Activated CD4-positive, alpha-beta T cell treated with anti-CD3 and anti-CD28 coated beads, Interleukin-2, amount 10 ng/mL, durations not matched to agents 24 days and 14 days (primary cell): ENCODE measurements at regions of chr3 and their contacts with region 1.

Region 1: GRCh38 chr3:31132132-31132769 is 237.8 kb upstream of the GADL1 start:
- DNase-seq: peak; percentile 69
- H3K4me3 Mint-ChIP-seq: no peak overlapping the region
- H3K27ac Mint-ChIP-seq: no peak overlapping the region
- H3K4me1 Mint-ChIP-seq: peaks cover 3% of the 10 kb centered on the region
- H3K27me3 Mint-ChIP-seq: no peaks in the 10 kb centered on the region

Region 2: DNA sequence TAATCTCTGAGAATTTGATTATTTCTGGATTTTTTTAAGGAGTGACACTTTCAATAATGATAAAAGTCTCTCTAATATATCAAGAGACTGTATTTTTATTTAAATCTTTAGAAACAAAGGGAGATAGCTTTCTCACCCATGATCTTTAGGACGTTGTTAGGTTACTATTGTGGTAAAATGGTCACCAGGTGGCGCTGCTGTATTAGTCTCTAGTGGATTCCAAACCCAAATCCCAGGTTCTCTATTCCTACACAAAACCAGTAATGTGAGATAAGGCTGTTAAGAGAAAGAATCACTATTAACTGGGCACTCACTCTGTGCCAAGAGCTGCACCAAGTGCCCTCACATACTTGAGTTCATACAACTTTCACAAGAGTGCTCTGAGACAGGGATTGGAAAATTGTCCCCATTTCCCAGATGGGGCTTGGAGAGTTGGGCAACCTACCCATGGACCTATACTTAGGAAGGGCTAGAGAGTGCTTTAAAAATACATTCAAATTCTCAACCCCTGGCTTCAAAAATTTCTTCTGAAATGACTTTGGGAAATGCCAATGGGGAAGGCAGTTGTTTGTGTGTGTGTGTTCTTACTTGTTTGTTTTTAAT is 1119.2 kb before region 1 on chr3:
- intact Hi-C with region 1: loop called (anchors 10 kb)
- DNase-seq: peak; percentile 79
- H3K4me3 Mint-ChIP-seq: no peak overlapping the region
- H3K27ac Mint-ChIP-seq: no peak overlapping the region
- H3K4me1 Mint-ChIP-seq: peaks cover 3% of the 10 kb centered on the region
- H3K27me3 Mint-ChIP-seq: peaks cover 7% of the 10 kb centered on the region

Region 3: DNA sequence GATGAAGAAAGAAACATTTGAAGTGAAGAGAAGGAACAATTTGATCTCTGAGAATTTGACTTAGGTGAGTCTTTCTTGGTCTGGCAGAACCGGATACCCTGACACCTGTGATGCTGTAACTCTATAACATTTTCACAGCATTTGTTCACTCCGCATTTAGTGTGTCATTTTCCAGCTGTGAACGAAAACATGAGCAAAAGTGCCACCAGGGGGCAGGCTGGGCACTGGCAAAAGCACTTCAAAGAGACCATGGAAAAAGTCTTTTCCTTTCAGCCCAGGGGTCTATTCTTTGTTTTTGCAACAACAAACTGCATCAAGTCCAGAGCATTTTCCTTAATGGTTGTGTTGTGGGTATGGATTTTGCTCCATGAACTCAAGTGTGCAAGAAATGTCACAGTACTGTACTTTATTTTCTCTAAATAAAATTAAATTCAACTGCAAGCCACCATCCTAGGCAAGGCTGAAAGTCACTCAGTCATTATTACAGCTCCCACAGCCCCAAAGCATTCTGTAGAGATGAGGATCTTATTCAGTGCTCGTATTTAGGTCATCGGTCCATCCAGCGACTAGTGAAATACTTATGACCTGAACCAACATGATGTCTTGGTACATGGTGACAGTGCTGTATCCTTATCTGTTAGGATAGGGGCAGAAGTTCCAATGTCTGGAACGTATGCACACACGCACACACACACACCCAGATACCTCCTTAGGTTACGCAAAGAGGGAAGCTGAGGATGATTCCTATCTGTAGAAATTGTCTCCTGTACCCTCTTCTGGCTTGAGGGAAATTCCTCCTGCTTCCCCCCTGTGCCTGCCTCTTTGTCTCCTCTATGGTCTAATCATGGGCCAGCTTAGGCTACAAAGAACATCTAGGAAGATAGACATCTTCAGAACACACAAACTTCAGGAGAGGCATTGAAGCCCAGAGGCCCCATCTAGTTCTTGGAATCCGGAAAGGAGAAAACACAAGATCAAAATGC is 363.3 kb before region 1 on chr3:
- intact Hi-C with region 1: loop called (anchors 1 kb)
- DNase-seq: peak; percentile 90
- H3K4me3 Mint-ChIP-seq: no peak overlapping the region
- H3K27ac Mint-ChIP-seq: no peak overlapping the region
- H3K4me1 Mint-ChIP-seq: peaks cover 4% of the 10 kb centered on the region
- H3K27me3 Mint-ChIP-seq: peaks cover 25% of the 10 kb centered on the region

Region 4: DNA sequence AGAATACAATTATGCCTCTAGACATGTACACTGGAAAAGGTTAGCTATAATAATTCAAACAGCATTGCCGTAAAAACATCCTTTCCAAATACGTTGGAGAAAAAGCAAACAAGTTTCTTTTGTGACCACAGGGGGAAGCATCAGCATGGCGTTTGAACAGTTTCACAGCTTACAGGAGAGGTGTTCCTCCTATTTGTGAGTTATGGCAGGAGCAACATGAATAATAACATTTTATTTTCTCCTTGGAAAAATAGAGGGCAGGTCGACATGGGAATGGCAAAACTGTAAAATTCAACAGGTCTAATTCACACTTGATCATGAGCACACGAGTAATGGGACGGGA is 198.1 kb before region 1 on chr3:
- intact Hi-C with region 1: loop called (anchors 10 kb)
- DNase-seq: no peak
- H3K4me3 Mint-ChIP-seq: no peak overlapping the region
- H3K27ac Mint-ChIP-seq: no peak overlapping the region
- H3K4me1 Mint-ChIP-seq: peaks cover 2% of the 10 kb centered on the region
- H3K27me3 Mint-ChIP-seq: peaks cover 1% of the 10 kb centered on the region

Region 5: DNA sequence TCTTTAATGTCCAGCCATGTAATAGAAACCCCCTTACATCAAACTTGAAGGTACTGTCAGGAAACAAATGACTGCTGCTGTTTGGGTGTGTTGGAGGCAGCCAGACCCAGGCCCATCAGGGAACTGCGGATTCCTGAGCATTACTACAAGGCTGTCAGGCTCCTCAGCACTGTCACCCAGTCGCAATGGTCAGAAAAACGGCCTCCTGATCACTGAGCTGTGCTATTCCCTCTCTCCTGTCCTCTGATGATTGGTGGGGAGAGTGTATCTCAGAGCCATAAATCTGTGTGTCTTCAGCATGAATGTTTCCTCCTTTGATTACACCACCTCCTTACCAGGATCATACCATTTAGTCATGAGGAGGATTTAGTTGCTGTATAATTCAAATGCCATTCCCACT is 102.5 kb before region 1 on chr3:
- intact Hi-C with region 1: no loop called
- DNase-seq: peak; percentile 42
- H3K4me3 Mint-ChIP-seq: no peak overlapping the region
- H3K27ac Mint-ChIP-seq: no peak overlapping the region
- H3K4me1 Mint-ChIP-seq: no peaks in the 10 kb centered on the region
- H3K27me3 Mint-ChIP-seq: no peaks in the 10 kb centered on the region

Region 6: DNA sequence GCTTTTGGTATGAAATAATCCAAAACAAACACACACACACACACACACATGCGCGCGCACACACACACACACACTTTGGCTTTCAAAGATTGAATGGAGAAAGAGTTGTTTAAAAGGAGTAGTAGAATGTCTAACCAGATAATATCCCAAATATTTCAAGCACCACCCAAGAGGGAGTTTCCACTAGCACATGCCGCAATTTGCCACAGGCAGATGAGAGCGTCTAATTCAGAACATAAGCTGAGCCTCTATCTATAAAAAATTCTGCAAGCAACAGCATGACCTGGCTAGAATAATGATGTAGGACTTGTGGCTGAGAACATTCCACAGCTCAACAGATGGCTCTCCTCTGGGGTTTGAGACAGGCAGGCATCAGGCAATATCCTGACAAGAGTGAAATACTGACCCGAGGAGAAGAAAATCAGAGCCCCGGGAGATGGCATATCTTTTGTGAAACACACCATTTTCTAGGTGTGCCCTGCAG is 64.7 kb after region 1 on chr3:
- intact Hi-C with region 1: no loop called
- DNase-seq: no peak
- H3K4me3 Mint-ChIP-seq: no peak overlapping the region
- H3K27ac Mint-ChIP-seq: no peak overlapping the region
- H3K4me1 Mint-ChIP-seq: peaks cover 5% of the 10 kb centered on the region
- H3K27me3 Mint-ChIP-seq: no peaks in the 10 kb centered on the region